OCI-LY7 (cell line): ENCODE measurements at regions of chr6 and their contacts with region 1.

Region 1: DNA sequence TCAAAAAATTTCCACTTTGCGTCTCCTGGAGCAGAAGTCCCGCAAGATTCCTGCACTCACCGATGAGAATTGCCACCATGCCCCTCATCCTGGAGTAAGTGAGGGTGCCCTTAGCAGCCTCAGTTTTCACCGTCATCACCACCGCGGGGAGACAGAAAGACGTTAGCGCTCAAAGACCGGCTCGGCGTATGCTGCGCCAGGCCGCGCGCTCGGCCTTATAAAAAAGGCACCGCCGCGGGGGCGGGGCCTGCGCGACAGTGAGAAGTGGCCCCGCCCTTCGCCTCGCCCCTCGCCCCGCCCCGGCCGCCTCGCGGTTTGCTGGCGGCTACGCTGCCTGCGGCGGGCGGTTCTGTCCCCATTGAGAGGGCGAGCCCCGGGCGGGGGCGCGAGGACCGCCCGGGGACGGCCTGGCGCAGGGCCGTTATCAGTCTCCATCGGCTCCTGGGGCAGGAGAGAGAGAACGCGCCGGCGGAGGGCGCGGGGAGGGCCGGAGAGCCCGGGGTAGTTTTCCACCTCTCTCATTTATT is 122.3 kb upstream of the SLC2A12 start:
- DNase-seq: peak; percentile 93
- H3K4me3 ChIP-seq: peak overlapping the region; percentile 76
- H3K27ac ChIP-seq: peak overlapping the region; percentile 39
- H3K4me1 ChIP-seq: peaks cover 35% of the 10 kb centered on the region
- CTCF ChIP-seq: no peak

Region 2: GRCh38 chr6:133788556-133788955 is 386.2 kb before region 1 on chr6:
- CTCF ChIA-PET with region 1: no interaction called
- POLR2A ChIA-PET with region 1: no interaction called
- intact Hi-C with region 1: no loop called
- DNase-seq: no peak
- H3K4me3 ChIP-seq: no peak overlapping the region
- H3K27ac ChIP-seq: no peak overlapping the region
- H3K4me1 ChIP-seq: no peaks in the 10 kb centered on the region
- CTCF ChIP-seq: no peak

Region 3: GRCh38 chr6:133923938-133924593 is 250.7 kb before region 1 on chr6:
- CTCF ChIA-PET with region 1: no interaction called
- POLR2A ChIA-PET with region 1: no interaction called
- intact Hi-C with region 1: no loop called
- DNase-seq: peak; percentile 69
- H3K4me3 ChIP-seq: no peak overlapping the region
- H3K27ac ChIP-seq: no peak overlapping the region
- H3K4me1 ChIP-seq: no peaks in the 10 kb centered on the region
- CTCF ChIP-seq: peak; percentile 98

Region 4: GRCh38 chr6:134453870-134454510 is 279.3 kb after region 1 on chr6:
- CTCF ChIA-PET with region 1: no interaction called
- POLR2A ChIA-PET with region 1: interaction called, 4 read pairs
- intact Hi-C with region 1: loop called (anchors 10 kb)
- DNase-seq: no peak
- H3K4me3 ChIP-seq: no peak overlapping the region
- H3K27ac ChIP-seq: no peak overlapping the region
- H3K4me1 ChIP-seq: no peaks in the 10 kb centered on the region
- CTCF ChIP-seq: no peak

Region 5: GRCh38 chr6:134640975-134641429 is 466.3 kb after region 1 on chr6:
- CTCF ChIA-PET with region 1: interaction called, 4 read pairs
- POLR2A ChIA-PET with region 1: interaction called, 4 read pairs
- intact Hi-C with region 1: loop called (anchors 1 kb)
- DNase-seq: peak; percentile 81
- H3K4me3 ChIP-seq: no peak overlapping the region
- H3K27ac ChIP-seq: no peak overlapping the region
- H3K4me1 ChIP-seq: peaks cover 21% of the 10 kb centered on the region
- CTCF ChIP-seq: peak; percentile 95

Region 6: GRCh38 chr6:134870677-134871498 is 696.2 kb after region 1 on chr6:
- CTCF ChIA-PET with region 1: no interaction called
- POLR2A ChIA-PET with region 1: no interaction called
- intact Hi-C with region 1: loop called (anchors 5 kb)
- DNase-seq: peak; percentile 94
- H3K4me3 ChIP-seq: peak overlapping the region; percentile 60
- H3K27ac ChIP-seq: peak overlapping the region; percentile 99
- H3K4me1 ChIP-seq: peaks cover 68% of the 10 kb centered on the region
- CTCF ChIP-seq: no peak

Region 7: GRCh38 chr6:134938896-134939295 is 764.2 kb after region 1 on chr6:
- CTCF ChIA-PET with region 1: no interaction called
- POLR2A ChIA-PET with region 1: interaction called, 10 read pairs
- intact Hi-C with region 1: loop called (anchors 1 kb)
- DNase-seq: peak; percentile 24
- H3K4me3 ChIP-seq: no peak overlapping the region
- H3K27ac ChIP-seq: no peak overlapping the region
- H3K4me1 ChIP-seq: no peaks in the 10 kb centered on the region
- CTCF ChIP-seq: no peak